ENCODE measurements at regions of chr7 and their contacts with region 1.

Region 1: DNA sequence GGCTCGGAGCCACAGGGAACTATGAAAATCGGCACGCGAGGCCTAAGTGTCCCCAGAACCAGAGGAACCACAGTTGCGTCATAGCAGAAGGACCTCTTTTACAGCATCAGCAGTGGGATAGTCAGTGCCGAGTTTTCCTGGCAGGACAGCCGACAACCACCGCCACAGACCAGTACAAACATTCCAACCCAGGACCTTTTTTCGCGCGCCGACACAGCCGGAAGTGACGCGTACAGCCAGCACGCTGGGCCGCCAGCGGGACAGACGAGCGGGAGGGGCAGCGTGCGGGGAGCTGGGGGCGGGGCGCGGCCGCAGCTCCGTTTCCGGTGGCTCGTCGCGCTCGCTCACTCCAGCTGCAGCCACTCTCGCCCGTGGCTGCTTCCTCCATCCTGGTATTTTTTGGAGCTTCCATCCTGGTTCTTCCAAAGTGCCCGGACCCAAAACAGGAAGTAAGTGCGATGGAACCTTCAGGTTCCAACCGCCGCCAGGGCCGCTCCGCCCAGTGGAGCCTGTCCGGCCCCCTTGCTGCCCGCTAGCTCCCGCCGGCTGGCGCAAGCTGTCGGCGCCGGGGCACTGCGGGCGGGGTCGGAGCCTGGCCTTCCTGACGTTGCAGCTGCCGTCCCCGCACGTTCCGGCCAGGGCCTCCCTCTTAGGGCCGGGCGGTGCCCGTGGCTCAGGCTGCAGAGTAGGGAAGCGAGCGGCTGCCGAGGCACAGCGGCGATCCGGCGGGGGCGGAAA is at the start of gene DMTF1:
- DNase-seq: peak; percentile 76 to 92 (median 85)
- ATAC-seq: peak; percentile 80 to 82
- H3K4me3 Mint-ChIP-seq: peak within 1 kb of the TSS; percentile 92 to 98 (median 94)
- H3K27ac Mint-ChIP-seq: peak within 1 kb of the TSS; percentile 93 to 100 (median 99)
- H3K4me1 Mint-ChIP-seq: peaks cover 23 to 51% (median 44%) of the 10 kb centered on the region in 4 donors
- H3K27me3 Mint-ChIP-seq: no peaks in the 10 kb centered on the region
- polyA plus RNA-seq, gene DMTF1: 22.2 to 33.5 (median 23.2) TPM

Region 2: DNA sequence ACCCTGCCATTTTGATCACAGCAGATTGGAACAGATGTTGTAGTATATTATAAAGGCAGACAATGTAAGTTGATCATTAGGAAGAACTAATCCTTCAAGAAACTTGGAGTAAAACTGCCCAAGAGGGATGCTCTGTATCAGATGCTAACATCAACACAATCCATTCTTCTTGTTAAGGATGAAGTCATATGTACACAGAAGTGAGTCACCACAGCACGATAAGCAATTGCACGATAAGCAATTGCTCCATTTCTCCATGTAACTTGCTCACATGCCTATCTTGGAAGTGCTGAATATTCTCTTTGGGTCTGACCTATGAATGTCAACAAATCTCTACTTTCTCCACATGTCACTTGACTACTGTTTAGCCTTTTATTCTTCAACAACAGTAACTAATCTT is 41.5 kb before region 1 on chr7:
- POLR2A ChIA-PET with region 1: no interaction called
- DNase-seq: no peak
- ATAC-seq: no peak
- H3K4me3 Mint-ChIP-seq: no peak overlapping the region
- H3K27ac Mint-ChIP-seq: no peak overlapping the region
- H3K4me1 Mint-ChIP-seq: no peaks in the 10 kb centered on the region
- H3K27me3 Mint-ChIP-seq: peaks cover 2 to 25% (median 15%) of the 10 kb centered on the region in 5 donors

Region 3: GRCh38 chr7:87213811-87214210 is 61.5 kb after region 1 on chr7:
- POLR2A ChIA-PET with region 1: interaction called, 136 read pairs
- DNase-seq: no peak
- ATAC-seq: no peak
- H3K4me3 Mint-ChIP-seq: peak overlapping the region; percentile 75 to 95 (median 88)
- H3K27ac Mint-ChIP-seq: peak overlapping the region; percentile 88 to 100 (median 95)
- H3K4me1 Mint-ChIP-seq: peaks cover 48 to 97% (median 86%) of the 10 kb centered on the region in 4 donors
- H3K27me3 Mint-ChIP-seq: no peaks in the 10 kb centered on the region

Region 4: DNA sequence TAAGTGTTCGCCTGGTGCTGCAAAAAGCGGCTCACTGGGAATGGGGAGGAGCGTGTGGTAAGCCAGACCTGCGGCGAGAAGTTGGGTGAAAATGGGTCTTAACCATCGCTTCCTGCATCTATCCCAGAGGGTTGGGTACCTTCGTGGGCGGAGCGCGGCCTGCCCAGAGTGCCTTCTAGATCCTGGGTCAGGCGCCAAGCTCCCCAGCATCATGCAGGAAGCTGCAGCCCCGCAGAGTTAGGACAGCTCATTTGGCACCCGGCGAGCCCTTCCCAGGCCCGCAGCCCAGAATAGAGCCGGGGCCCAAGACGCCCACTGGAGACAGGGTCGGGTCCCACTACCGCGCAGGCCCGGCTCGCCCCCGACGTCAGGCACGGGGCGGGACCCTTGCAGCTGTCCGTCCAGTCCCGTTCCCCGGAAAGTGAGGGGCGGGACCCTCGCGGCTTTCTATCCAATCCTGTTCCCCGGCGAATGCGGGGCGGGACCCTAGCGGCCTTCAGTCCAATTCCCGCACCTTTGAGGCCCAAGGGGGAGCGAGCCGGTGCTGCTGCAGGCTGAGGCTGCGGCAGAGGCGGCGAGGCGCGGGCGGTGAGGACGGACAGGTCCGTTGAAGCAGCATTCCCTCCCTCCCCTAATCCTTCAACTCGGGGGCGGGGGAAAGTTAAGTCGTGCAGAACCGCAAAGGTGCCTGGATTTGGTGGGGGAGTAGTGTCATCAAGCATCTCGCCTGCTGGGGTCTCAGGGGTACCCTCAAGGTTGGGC is 193.1 kb after region 1 on chr7 and contains the start of gene CROT:
- POLR2A ChIA-PET with region 1: interaction called, 11 read pairs
- DNase-seq: peak; percentile 89 to 96 (median 92)
- ATAC-seq: peak; percentile 95 to 96
- H3K4me3 Mint-ChIP-seq: peak within 1 kb of the TSS; percentile 92 to 99 (median 96)
- H3K27ac Mint-ChIP-seq: peak within 1 kb of the TSS; percentile 81 to 98 (median 96)
- H3K4me1 Mint-ChIP-seq: peaks cover 7 to 53% (median 44%) of the 10 kb centered on the region in 4 donors
- H3K27me3 Mint-ChIP-seq: no peaks in the 10 kb centered on the region
- polyA plus RNA-seq, gene CROT: 3.2 to 5.3 (median 4.4) TPM

Region 5: GRCh38 chr7:87452273-87452672 is 300.0 kb after region 1 on chr7:
- POLR2A ChIA-PET with region 1: no interaction called
- DNase-seq: no peak
- ATAC-seq: no peak
- H3K4me3 Mint-ChIP-seq: no peak overlapping the region
- H3K27ac Mint-ChIP-seq: no peak overlapping the region
- H3K4me1 Mint-ChIP-seq: peaks cover 1 to 4% (median 3%) of the 10 kb centered on the region in 4 donors
- H3K27me3 Mint-ChIP-seq: peaks cover 4 to 21% (median 6%) of the 10 kb centered on the region in 5 donors

Measured in naive thymus-derived CD8-positive, alpha-beta T cell (primary cell).